Naive thymus-derived CD8-positive, alpha-beta T cell (primary cell): ENCODE measurements at regions of chr6 and their contacts with region 1.

Region 1: GRCh38 chr6:37051138-37052026 is 45.9 kb downstream of the FGD2 start:
- DNase-seq: peak; percentile 73 to 91 (median 84)
- ATAC-seq: peak; percentile 71 to 78
- H3K4me3 Mint-ChIP-seq: peak overlapping the region; percentile 50 to 91 (median 75)
- H3K27ac Mint-ChIP-seq: peak overlapping the region; percentile 81 to 98 (median 94)
- H3K4me1 Mint-ChIP-seq: peaks cover 38 to 70% (median 61%) of the 10 kb centered on the region in 4 donors
- H3K27me3 Mint-ChIP-seq: no peaks in the 10 kb centered on the region

Region 2: GRCh38 chr6:37018198-37019064 is 33.0 kb before region 1 on chr6:
- POLR2A ChIA-PET with region 1: interaction called, 23 read pairs
- DNase-seq: peak; percentile 68 to 92 (median 82)
- ATAC-seq: peak; percentile 93 to 95
- H3K4me3 Mint-ChIP-seq: no peak overlapping the region
- H3K27ac Mint-ChIP-seq: peak overlapping the region; percentile 17 to 92 (median 76)
- H3K4me1 Mint-ChIP-seq: peaks cover 27 to 47% (median 42%) of the 10 kb centered on the region in 4 donors
- H3K27me3 Mint-ChIP-seq: no peaks in the 10 kb centered on the region

Region 3: DNA sequence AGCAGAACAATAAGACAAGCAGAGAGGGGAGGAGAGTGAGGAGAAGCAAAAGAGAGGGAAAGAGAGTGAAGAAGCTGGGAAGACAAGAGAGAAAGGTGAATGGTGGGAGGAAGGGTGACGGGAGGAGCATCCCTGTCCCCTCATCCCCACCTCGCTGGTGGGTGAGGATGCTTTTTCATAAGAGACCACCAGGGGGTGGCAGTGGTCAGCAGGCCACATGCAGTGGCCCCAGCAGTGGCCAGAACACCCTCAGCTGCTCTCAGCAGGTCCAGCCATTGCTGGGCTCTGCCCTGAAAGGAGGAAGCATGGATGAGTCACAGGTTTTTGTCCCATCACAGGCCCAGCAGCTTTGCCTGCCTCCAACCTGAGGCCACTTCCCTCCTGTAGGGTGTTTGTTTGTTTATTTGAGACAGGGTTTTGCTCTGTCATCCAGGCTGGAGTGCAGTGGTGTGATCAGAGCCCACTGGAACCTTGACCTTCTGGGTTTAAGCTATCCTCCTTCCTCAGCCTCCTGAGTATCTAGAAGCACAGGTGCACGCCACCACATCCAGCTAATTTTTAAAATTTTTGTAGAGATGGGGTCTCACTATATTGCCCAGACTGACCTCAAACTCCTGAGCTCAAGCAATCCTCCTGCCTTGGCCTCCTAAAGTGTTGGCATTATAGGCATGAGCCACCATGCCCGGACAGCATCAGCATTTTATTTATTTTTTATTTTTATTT is 22.0 kb before region 1 on chr6:
- POLR2A ChIA-PET with region 1: interaction called, 10 read pairs
- DNase-seq: peak in 5 of 10 donors; percentile 31 to 68 (median 40)
- ATAC-seq: peak; percentile 50 to 68
- H3K4me3 Mint-ChIP-seq: no peak overlapping the region
- H3K27ac Mint-ChIP-seq: peak overlapping the region in 6 of 10 donors; percentile 10 to 88 (median 50)
- H3K4me1 Mint-ChIP-seq: peaks cover 7 to 36% (median 23%) of the 10 kb centered on the region in 4 donors
- H3K27me3 Mint-ChIP-seq: no peaks in the 10 kb centered on the region

Region 4: GRCh38 chr6:37110500-37111461 is 59.4 kb after region 1 on chr6:
- POLR2A ChIA-PET with region 1: no interaction called
- DNase-seq: no peak
- ATAC-seq: no peak
- H3K4me3 Mint-ChIP-seq: no peak overlapping the region
- H3K27ac Mint-ChIP-seq: no peak overlapping the region
- H3K4me1 Mint-ChIP-seq: peaks cover 0 to 5% (median 0%) of the 10 kb centered on the region in 4 donors
- H3K27me3 Mint-ChIP-seq: no peaks in the 10 kb centered on the region